ENCODE measurements at regions of chr11 and their contacts with region 1.

Region 1: GRCh38 chr11:11895672-11896071 is 53.9 kb downstream of the USP47 start:
- DNase-seq: peak; percentile 23
- ATAC-seq: peak; percentile 39; the same call in 1 of the 2 replicates
- H3K4me3 ChIP-seq: no peak overlapping the region
- H3K27ac ChIP-seq: no peak overlapping the region
- H3K4me1 ChIP-seq: peaks cover 17% of the 10 kb centered on the region
- H3K27me3 ChIP-seq: no peaks in the 10 kb centered on the region
- CTCF ChIP-seq: peak; percentile 57; the same call in 1 of the 2 replicates

Region 2: GRCh38 chr11:11313426-11313825 is 582.2 kb before region 1 on chr11:
- CTCF ChIA-PET with region 1: no interaction called
- POLR2A ChIA-PET with region 1: no interaction called
- intact Hi-C with region 1: no loop called
- DNase-seq: peak; percentile 73
- ATAC-seq: peak; percentile 57
- H3K4me3 ChIP-seq: no peak overlapping the region
- H3K27ac ChIP-seq: peak overlapping the region; percentile 22
- H3K4me1 ChIP-seq: peaks cover 15% of the 10 kb centered on the region
- H3K27me3 ChIP-seq: no peaks in the 10 kb centered on the region
- CTCF ChIP-seq: no peak

Region 3: DNA sequence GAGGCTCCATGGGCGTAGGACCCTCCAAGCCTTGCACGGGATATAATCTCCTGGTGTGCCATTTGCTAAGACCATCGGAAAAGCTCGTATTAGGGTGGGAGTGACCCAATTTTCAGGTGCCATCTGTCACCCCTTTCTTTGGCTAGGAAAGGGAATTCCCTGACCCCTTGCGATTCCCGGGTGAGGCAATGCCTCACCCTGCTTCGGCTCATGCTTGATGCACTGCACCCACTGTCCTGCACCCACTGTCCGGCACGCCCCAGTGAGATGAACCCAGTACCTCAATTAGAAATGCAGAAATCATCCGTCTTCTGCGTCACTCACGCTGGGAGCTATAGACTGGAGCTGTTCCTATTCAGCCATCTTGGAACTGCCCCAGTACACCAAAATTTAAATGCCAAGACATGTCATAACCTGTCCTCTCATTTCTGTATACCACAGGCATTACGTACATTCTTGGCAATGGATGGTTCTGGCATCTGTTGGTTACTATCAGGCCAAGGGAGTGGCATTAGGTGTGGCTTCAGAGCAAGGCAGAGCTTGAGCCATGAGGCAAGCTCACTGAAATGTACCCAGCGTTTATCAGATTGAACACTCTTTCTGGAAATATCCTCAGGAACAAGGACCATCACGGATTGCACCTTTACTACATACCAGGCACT is 178.5 kb before region 1 on chr11:
- CTCF ChIA-PET with region 1: no interaction called
- POLR2A ChIA-PET with region 1: no interaction called
- intact Hi-C with region 1: no loop called
- DNase-seq: peak; percentile 39
- ATAC-seq: no peak
- H3K4me3 ChIP-seq: no peak overlapping the region
- H3K27ac ChIP-seq: no peak overlapping the region
- H3K4me1 ChIP-seq: no peaks in the 10 kb centered on the region
- H3K27me3 ChIP-seq: no peaks in the 10 kb centered on the region
- CTCF ChIP-seq: no peak

Region 4: GRCh38 chr11:11848891-11849746 is 46.6 kb before region 1 on chr11:
- CTCF ChIA-PET with region 1: no interaction called
- POLR2A ChIA-PET with region 1: no interaction called
- intact Hi-C with region 1: loop called (anchors 5 kb)
- DNase-seq: peak; percentile 75
- ATAC-seq: peak; percentile 89
- H3K4me3 ChIP-seq: no peak overlapping the region
- H3K27ac ChIP-seq: no peak overlapping the region
- H3K4me1 ChIP-seq: peaks cover 28% of the 10 kb centered on the region
- H3K27me3 ChIP-seq: no peaks in the 10 kb centered on the region
- CTCF ChIP-seq: peak; percentile 79

Region 5: DNA sequence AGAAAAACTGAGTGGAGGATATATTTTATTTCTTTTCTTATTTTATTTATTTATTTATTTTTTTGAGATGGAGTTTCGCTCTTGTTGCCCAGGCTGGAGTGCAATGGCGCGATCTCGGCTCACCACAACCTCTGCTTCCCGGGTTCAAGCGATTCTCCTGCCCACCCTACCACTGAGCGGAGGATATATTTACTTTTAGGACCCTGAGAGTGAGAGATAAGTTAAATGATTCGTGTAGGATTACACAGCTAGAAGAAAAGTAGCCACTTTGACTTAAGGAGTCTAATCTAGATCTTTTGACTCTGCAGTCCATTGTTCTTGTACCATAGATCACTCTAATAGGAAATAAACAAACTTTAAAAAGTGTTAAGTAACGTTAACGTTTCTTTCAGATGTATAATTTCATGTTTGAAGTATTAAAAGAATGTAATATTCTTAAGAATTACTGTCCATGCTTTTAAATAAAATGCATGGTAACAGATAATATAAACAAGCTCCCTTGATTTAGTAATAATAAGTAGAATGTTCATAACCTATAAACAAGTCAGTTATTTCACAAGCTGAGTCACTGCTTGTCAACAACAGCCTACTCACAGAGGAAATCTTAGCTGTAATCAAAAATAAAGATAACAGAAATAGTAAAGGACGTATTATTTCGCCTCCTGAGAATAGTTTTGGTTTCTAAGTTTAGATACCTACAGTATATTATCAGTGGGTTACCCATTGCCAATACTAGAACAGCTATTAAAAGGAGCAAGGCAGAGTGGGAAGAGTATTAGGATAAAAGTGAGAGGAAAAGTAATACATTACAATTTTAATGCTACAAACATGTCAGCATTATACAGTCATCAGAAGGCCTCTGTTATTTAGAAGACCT is 35.3 kb before region 1 on chr11:
- CTCF ChIA-PET with region 1: no interaction called
- POLR2A ChIA-PET with region 1: no interaction called
- intact Hi-C with region 1: no loop called
- DNase-seq: peak; percentile 28
- ATAC-seq: peak; percentile 79
- H3K4me3 ChIP-seq: peak overlapping the region; percentile 27; the same call in 1 of the 2 replicates
- H3K27ac ChIP-seq: 0 out of 2 replicates have a peak overlapping the region, but pooled peaks have one; percentile 6
- H3K4me1 ChIP-seq: peaks cover 15% of the 10 kb centered on the region
- H3K27me3 ChIP-seq: no peaks in the 10 kb centered on the region
- CTCF ChIP-seq: no peak

Measured in PC-3 (cell line).